Colonic mucosa (tissue), 4 donors: ENCODE measurements at regions of chr4 and their contacts with region 1.

Region 1: GRCh38 chr4:38675146-38676121 is 11.4 kb downstream of the KLF3 start:
- DNase-seq: peak; percentile 93
- H3K4me3 ChIP-seq: no peak overlapping the region
- H3K27ac ChIP-seq: peak overlapping the region; percentile 98
- H3K4me1 ChIP-seq: peaks cover 22% of the 10 kb centered on the region
- H3K27me3 ChIP-seq: no peaks in the 10 kb centered on the region
- CTCF ChIP-seq: peak; percentile 90

Region 2: GRCh38 chr4:38062088-38062893 is 613.1 kb before region 1 on chr4:
- intact Hi-C with region 1: loop called (anchors 10 kb)
- DNase-seq: peak; percentile 90
- H3K4me3 ChIP-seq: no peak overlapping the region
- H3K27ac ChIP-seq: peak overlapping the region; percentile 38
- H3K4me1 ChIP-seq: no peaks in the 10 kb centered on the region
- H3K27me3 ChIP-seq: no peaks in the 10 kb centered on the region
- CTCF ChIP-seq: peak; percentile 83

Region 3: DNA sequence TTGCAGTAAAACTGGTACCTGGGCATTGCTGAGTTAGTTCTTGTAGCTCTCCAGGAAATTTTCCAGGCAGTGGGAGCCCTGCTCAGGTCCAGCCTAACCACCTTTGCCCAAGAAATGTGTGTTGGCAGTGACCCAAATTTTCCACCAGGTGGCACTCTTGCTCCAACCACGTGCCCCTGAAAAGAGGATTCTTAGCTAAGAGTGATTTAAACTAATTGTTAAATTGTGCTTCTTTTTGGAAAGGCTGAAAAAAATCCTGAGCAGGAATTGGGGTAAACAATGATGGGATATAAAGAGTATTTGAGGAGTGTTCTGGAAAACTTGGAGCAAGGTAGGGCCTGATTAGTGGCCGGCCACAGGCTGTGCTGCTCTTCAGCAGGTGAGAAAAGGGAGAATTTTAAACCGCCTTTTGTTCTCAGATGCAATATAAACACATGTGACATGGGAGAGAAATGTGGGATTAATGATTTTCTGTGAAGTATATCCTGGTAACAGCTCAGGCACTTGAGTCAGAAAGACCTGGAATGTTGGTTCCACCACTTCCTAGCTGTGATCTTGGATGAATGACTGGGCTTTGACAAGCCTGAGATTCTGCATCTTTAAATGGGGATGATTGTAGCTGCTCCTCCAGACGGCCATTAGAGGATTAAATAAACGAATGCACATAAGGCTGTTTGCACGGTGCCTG is 495.6 kb before region 1 on chr4:
- intact Hi-C with region 1: loop called (anchors 2 kb)
- DNase-seq: peak; percentile 88
- H3K4me3 ChIP-seq: no peak overlapping the region
- H3K27ac ChIP-seq: peak overlapping the region; percentile 38
- H3K4me1 ChIP-seq: no peaks in the 10 kb centered on the region
- H3K27me3 ChIP-seq: no peaks in the 10 kb centered on the region
- CTCF ChIP-seq: peak; percentile 99

Region 4: GRCh38 chr4:38319456-38320342 is 355.7 kb before region 1 on chr4:
- intact Hi-C with region 1: loop called (anchors 2 kb)
- DNase-seq: peak; percentile 99
- H3K4me3 ChIP-seq: peak overlapping the region; percentile 26
- H3K27ac ChIP-seq: peak overlapping the region; percentile 92
- H3K4me1 ChIP-seq: peaks cover 7% of the 10 kb centered on the region
- H3K27me3 ChIP-seq: no peaks in the 10 kb centered on the region
- CTCF ChIP-seq: peak; percentile 99

Region 5: GRCh38 chr4:38788327-38788726 is 112.9 kb after region 1 on chr4:
- intact Hi-C with region 1: no loop called
- DNase-seq: no peak
- H3K4me3 ChIP-seq: no peak overlapping the region
- H3K27ac ChIP-seq: no peak overlapping the region
- H3K4me1 ChIP-seq: no peaks in the 10 kb centered on the region
- H3K27me3 ChIP-seq: no peaks in the 10 kb centered on the region
- CTCF ChIP-seq: no peak